CD8-positive, alpha-beta T cell (primary cell): ENCODE measurements at regions of chr14 and their contacts with region 1.

Region 1: GRCh38 chr14:49497725-49498348 is 88.3 kb downstream of the RPS29 start:
- DNase-seq: peak in 3 of 9 experiments; percentile 5 to 70 (median 63)
- ATAC-seq: peak; percentile 82
- H3K4me3 ChIP-seq: no peak overlapping the region
- H3K4me3 Mint-ChIP-seq: no peak overlapping the region
- H3K27ac ChIP-seq: no peak overlapping the region
- H3K27ac Mint-ChIP-seq: no peak overlapping the region
- H3K4me1 ChIP-seq: no peaks in the 10 kb centered on the region
- H3K4me1 Mint-ChIP-seq: peaks cover 3% of the 10 kb centered on the region
- H3K27me3 ChIP-seq: peaks cover 0 to 4% of the 10 kb centered on the region in 2 experiments
- H3K27me3 Mint-ChIP-seq: peaks cover 19% of the 10 kb centered on the region
- CTCF ChIP-seq: peak; percentile 89

Region 2: DNA sequence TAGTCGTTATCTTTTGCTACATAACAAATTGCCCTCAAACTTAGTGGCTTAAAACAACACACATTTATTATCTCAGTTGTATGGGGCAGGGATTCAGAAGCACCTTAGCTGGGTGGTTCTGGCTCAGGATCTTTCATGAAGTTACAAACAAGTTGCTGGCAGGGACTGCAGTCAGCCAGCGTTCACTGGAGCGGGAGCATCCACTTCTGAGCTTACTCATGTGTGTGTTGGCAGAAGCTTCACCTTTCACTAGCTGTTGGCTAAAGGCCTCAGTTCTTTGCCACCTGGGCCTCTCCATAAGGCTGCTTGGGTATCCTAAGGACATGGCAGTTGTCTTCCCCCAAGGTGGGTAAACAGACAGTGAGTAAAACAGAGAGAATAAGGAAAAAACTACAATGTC is 277.3 kb before region 1 on chr14:
- CTCF ChIA-PET with region 1: no interaction called
- POLR2A ChIA-PET with region 1: no interaction called
- intact Hi-C with region 1: no loop called
- DNase-seq: no peak
- ATAC-seq: no peak
- H3K4me3 ChIP-seq: no peak overlapping the region
- H3K4me3 Mint-ChIP-seq: no peak overlapping the region
- H3K27ac ChIP-seq: no peak overlapping the region
- H3K27ac Mint-ChIP-seq: no peak overlapping the region
- H3K4me1 ChIP-seq: no peaks in the 10 kb centered on the region
- H3K4me1 Mint-ChIP-seq: no peaks in the 10 kb centered on the region
- H3K27me3 ChIP-seq: no peaks in the 10 kb centered on the region
- H3K27me3 Mint-ChIP-seq: peaks cover 2% of the 10 kb centered on the region
- CTCF ChIP-seq: no peak

Region 3: DNA sequence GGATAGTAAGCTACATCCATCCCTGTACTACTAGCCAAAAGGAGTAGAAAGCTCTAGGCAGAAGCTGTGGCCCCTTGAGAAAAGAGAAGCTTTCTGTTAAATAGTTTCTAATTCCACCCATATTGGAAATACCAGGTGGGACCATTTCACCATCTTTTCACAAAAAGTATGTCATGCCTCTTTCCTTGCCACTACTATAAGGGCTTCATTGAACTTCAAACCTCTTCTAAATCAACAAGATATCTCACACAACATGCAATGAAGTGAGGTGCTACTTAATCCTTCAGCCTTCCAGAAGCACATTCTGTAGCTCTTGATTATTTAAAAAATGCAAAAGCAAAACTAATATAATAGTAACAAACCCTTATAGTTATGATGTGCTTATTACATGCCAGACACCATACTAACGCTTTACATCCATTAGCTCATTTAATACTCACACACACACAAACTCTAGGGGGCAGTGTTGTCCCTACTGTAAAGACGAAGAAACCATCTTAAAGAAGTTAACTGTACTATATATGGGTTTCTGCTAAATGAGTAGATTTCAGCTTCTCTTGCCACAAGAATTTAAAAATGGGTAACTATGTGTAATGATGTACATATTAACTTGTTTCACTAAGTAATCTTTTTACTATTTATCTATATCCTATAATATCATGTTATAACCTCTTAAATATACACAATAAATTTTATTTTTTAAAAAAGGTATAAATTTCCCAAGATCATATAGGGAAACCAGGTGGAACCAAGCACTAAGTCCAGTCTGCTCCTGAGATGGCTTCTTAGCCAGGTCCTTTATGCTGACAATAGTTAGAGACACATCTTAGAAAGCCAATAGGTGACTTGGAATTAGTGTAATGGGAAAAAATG is 36.1 kb before region 1 on chr14:
- CTCF ChIA-PET with region 1: interaction called, 34 read pairs
- POLR2A ChIA-PET with region 1: no interaction called
- intact Hi-C with region 1: loop called (anchors 2 kb)
- DNase-seq: peak in 8 of 9 experiments; percentile 39 to 85 (median 54)
- ATAC-seq: peak; percentile 87
- H3K4me3 ChIP-seq: no peak overlapping the region
- H3K4me3 Mint-ChIP-seq: no peak overlapping the region
- H3K27ac ChIP-seq: no peak overlapping the region
- H3K27ac Mint-ChIP-seq: no peak overlapping the region
- H3K4me1 ChIP-seq: no peaks in the 10 kb centered on the region
- H3K4me1 Mint-ChIP-seq: no peaks in the 10 kb centered on the region
- H3K27me3 ChIP-seq: no peaks in the 10 kb centered on the region
- H3K27me3 Mint-ChIP-seq: peaks cover 3% of the 10 kb centered on the region
- CTCF ChIP-seq: peak; percentile 78